ENCODE measurements at regions of chr5 and their contacts with region 1.

Region 1: DNA sequence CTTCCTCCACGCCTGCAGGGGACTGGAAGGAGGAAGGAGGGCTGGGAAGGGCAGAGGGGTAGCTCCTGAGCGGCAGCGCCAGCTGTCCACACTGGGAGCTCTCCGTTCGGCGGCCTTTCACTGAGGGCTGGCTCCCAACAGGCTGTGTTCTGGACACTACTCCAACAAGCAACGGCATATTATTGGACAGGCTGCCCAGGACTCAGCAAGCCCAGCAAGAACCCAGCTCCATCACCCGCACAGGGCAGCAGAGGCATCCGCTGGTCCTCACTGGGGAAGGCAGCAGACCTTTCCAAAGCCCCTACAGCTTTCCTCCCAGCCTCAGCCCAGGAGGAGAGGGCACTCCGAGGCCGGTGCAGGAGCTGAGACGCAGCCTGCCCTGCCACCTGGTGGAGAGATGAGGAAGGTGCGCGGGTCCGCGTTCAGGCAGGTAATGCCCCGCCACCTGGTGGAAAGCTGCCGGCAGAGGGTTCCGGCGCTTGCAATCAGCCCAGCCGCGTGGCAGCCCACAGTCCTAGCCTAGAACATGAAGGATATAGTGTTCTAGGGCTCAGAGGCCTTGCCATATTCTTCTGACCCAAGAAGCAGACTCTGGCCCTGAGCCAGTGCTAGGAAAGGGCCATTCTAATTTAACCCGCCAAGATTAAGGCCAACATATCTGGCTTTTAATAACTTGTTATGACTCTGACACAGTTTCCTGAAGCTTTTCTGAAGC is 74.4 kb downstream of the NRG2 start:
- DNase-seq: peak; percentile 87 to 94
- ATAC-seq: peak; percentile 91 to 97 (median 94)
- H3K4me3 ChIP-seq: peak overlapping the region; percentile 24
- H3K27ac ChIP-seq: peak overlapping the region; percentile 90
- H3K4me1 ChIP-seq: peaks cover 42% of the 10 kb centered on the region
- H3K27me3 ChIP-seq: no peaks in the 10 kb centered on the region
- CTCF ChIP-seq: peak; percentile 100

Region 2: GRCh38 chr5:139837631-139838422 is 130.9 kb before region 1 on chr5:
- intact Hi-C with region 1: no loop called
- DNase-seq: no peak
- ATAC-seq: no peak
- H3K4me3 ChIP-seq: no peak overlapping the region
- H3K27ac ChIP-seq: no peak overlapping the region
- H3K4me1 ChIP-seq: no peaks in the 10 kb centered on the region
- H3K27me3 ChIP-seq: peaks cover 0 to 8% (median 0%) of the 10 kb centered on the region in 3 donors
- CTCF ChIP-seq: no peak

Region 3: DNA sequence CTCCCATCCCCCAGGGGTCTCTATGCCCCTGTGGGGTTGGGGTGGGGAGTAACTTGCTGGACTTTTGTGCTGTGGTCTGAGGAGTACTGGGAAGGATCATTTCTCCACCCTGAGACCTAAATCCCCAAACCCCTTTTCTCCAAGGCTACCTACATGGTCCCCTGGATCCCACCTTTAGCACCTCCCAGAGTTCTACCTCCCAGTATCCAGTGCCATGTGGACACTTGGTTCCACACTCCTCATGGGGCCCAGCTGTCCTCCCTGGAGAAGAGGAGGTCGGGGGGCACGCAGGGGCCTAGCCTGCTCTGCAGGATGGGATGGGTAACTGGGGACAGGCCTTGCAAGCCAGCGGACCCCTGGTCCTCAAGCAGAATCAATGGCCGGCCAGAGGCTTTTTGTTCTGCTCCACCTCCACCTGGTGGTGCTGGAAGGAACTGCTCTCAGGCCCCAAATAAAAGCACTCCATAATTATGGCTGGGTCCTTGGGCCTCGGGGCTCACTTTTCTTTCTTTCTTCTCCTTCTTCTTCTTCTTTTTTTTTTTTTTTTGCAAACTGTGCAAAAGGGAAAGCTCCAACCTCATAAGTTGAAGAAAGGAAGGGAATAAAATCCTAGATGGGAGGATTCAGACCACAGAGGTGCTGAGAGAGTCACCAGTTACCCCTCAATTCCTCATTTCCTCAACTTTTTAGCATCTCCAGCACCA is 104.7 kb before region 1 on chr5:
- intact Hi-C with region 1: loop called (anchors 5 kb)
- DNase-seq: peak; percentile 65 to 73
- ATAC-seq: peak; percentile 75 to 85 (median 83)
- H3K4me3 ChIP-seq: no peak overlapping the region
- H3K27ac ChIP-seq: peak overlapping the region; percentile 82
- H3K4me1 ChIP-seq: peaks cover 12% of the 10 kb centered on the region
- H3K27me3 ChIP-seq: no peaks in the 10 kb centered on the region
- CTCF ChIP-seq: peak; percentile 91

Region 4: GRCh38 chr5:139882961-139883539 is 85.7 kb before region 1 on chr5:
- intact Hi-C with region 1: loop called in 1 of 2 experiments (anchors 5 kb)
- DNase-seq: no peak
- ATAC-seq: peak in 2 of 4 donors; percentile 18 to 28
- H3K4me3 ChIP-seq: no peak overlapping the region
- H3K27ac ChIP-seq: no peak overlapping the region
- H3K4me1 ChIP-seq: peaks cover 16% of the 10 kb centered on the region
- H3K27me3 ChIP-seq: no peaks in the 10 kb centered on the region
- CTCF ChIP-seq: no peak

Region 5: GRCh38 chr5:139903795-139904565 is 64.7 kb before region 1 on chr5:
- intact Hi-C with region 1: loop called (anchors 5 to 10 kb)
- DNase-seq: peak; percentile 43 to 64
- ATAC-seq: peak; percentile 67 to 84 (median 70)
- H3K4me3 ChIP-seq: peak overlapping the region; percentile 82
- H3K27ac ChIP-seq: peak overlapping the region; percentile 58
- H3K4me1 ChIP-seq: peaks cover 25% of the 10 kb centered on the region
- H3K27me3 ChIP-seq: no peaks in the 10 kb centered on the region
- CTCF ChIP-seq: no peak

Region 6: GRCh38 chr5:139985733-139986132 is 17.0 kb after region 1 on chr5:
- intact Hi-C with region 1: no loop called
- DNase-seq: peak in 1 of 2 donors; percentile 72
- ATAC-seq: peak; percentile 96 to 98 (median 98)
- H3K4me3 ChIP-seq: no peak overlapping the region
- H3K27ac ChIP-seq: peak overlapping the region; percentile 82
- H3K4me1 ChIP-seq: peaks cover 41% of the 10 kb centered on the region
- H3K27me3 ChIP-seq: no peaks in the 10 kb centered on the region
- CTCF ChIP-seq: no peak